Heart right ventricle (tissue), 16 donors: ENCODE measurements at regions of chr6 and their contacts with region 1.

Region 1: GRCh38 chr6:110873981-110874879 is at the start of gene AMD1:
- DNase-seq: peak; percentile 97 to 99
- ATAC-seq: peak; percentile 89 to 97 (median 94)
- H3K4me3 ChIP-seq: peak within 1 kb of the TSS; percentile 68 to 96 (median 91)
- H3K27ac ChIP-seq: peak within 1 kb of the TSS; percentile 84 to 97 (median 95)
- H3K4me1 ChIP-seq: peaks cover 0 to 42% (median 30%) of the 10 kb centered on the region in 9 donors
- H3K27me3 ChIP-seq: no peaks in the 10 kb centered on the region
- CTCF ChIP-seq: no peak
- total RNA-seq, gene AMD1: 38.0 to 101 (median 55.3) TPM

Region 2: GRCh38 chr6:110543106-110543505 is 331.1 kb before region 1 on chr6:
- intact Hi-C with region 1: loop called in 4 of 10 experiments (anchors 5 to 10 kb)
- DNase-seq: peak in 1 of 2 donors; percentile 15
- ATAC-seq: peak; percentile 26 to 63 (median 44)
- H3K4me3 ChIP-seq: no peak overlapping the region
- H3K27ac ChIP-seq: peak overlapping the region; percentile 37 to 90 (median 88)
- H3K4me1 ChIP-seq: peaks cover 9 to 37% (median 20%) of the 10 kb centered on the region in 9 donors
- H3K27me3 ChIP-seq: no peaks in the 10 kb centered on the region
- CTCF ChIP-seq: no peak

Region 3: GRCh38 chr6:110826236-110827129 is 47.7 kb before region 1 on chr6:
- intact Hi-C with region 1: loop called in 1 of 10 experiments (anchors 5 kb)
- DNase-seq: no peak
- ATAC-seq: peak in 5 of 8 donors; percentile 39 to 55 (median 47)
- H3K4me3 ChIP-seq: peak overlapping the region in 1 of 10 donors; percentile 14
- H3K27ac ChIP-seq: peak overlapping the region in 3 of 10 donors; percentile 36 to 86 (median 44)
- H3K4me1 ChIP-seq: peaks cover 0 to 37% (median 15%) of the 10 kb centered on the region in 9 donors
- H3K27me3 ChIP-seq: no peaks in the 10 kb centered on the region
- CTCF ChIP-seq: no peak

Region 4: DNA sequence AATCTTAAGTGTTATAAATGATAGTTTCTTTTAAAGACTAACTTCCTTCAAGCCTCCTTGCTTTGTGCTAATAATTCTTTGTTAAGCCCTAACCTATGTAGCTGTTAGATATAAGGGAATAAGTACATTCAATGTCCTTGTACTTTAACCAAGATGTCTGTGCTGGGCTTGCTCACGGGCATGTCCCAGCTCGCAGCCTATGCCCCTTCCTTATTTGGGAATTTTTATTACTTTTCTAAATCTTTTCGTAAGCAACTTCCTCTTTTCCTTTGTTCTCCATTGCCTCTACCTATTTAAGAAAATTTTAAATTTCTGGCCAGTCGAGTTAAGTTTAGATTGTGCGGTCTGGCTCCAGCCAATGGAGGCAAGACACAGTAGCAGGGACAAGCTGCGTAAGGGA is 33.0 kb before region 1 on chr6:
- intact Hi-C with region 1: no loop called
- DNase-seq: no peak
- ATAC-seq: no peak
- H3K4me3 ChIP-seq: no peak overlapping the region
- H3K27ac ChIP-seq: no peak overlapping the region
- H3K4me1 ChIP-seq: peaks cover 0 to 4% (median 0%) of the 10 kb centered on the region in 9 donors
- H3K27me3 ChIP-seq: no peaks in the 10 kb centered on the region
- CTCF ChIP-seq: no peak

Region 5: DNA sequence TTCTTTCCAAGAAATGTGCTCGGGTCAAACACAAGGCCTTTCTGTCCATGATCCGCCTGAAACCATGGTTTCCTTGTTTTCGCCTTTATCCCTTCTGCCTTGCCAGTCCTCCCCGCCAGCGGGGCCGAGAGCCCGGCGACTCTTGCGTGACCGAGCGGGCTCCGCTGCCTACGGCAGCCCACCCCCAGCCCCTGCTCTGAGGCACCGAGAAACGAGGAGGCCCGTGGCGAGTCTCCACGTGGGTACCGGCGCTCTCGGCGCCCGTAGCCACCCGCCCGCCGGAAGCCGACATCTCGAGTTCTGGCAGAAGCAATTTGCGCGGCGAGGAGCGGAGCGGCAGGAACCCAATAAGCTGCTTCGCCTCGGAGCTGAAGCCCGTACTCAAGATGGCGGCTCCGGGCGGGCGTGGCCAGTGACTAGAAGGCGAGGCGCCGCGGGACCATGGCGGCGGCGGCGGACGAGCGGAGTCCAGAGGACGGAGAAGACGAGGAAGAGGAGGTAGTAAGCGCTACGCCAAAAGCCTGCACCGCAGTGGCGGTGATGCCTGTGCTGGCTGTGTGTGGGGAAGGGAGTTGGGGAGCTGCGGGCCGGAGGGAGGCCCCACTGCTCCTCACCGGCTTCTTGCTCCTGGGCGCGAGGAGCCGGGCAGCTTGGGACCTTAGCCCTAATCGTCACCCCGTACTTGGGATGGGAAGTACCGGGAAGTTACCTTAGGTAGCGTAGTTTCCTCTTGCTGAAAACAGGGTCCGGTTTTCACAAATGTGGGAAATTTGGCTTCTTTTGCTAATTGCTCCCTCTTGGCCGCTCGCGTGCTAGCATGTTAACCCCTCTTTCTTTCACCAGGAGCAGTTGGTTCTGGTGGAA is 84.3 kb after region 1 on chr6 and contains the start of gene GTF3C6:
- intact Hi-C with region 1: loop called in 4 of 10 experiments (anchors 2 to 10 kb)
- DNase-seq: peak; percentile 92 to 94
- ATAC-seq: peak; percentile 98 to 100 (median 99)
- H3K4me3 ChIP-seq: peak within 1 kb of the TSS; percentile 55 to 91 (median 83)
- H3K27ac ChIP-seq: peak within 1 kb of the TSS; percentile 46 to 97 (median 90)
- H3K4me1 ChIP-seq: peaks cover 0 to 24% (median 13%) of the 10 kb centered on the region in 9 donors
- H3K27me3 ChIP-seq: no peaks in the 10 kb centered on the region
- CTCF ChIP-seq: peak in 1 of 9 donors; percentile 6
- total RNA-seq, gene GTF3C6: 96.0 to 128 (median 107) TPM